Dendritic cell treated with granulocyte-macrophage colony-stimulating factor and Interleukin-4, amounts not matched to agents 40 ng/mL and 50 ng/mL, for 4 days (primary cell): ENCODE measurements at regions of chr9 and their contacts with region 1.

Region 1: GRCh38 chr9:38068866-38069629 is at the start of gene SHB:
- H3K4me3 Mint-ChIP-seq: peak within 1 kb of the TSS; percentile 85
- H3K27ac Mint-ChIP-seq: peak within 1 kb of the TSS; percentile 81
- H3K4me1 Mint-ChIP-seq: peaks cover 68% of the 10 kb centered on the region
- H3K27me3 Mint-ChIP-seq: peaks cover 3% of the 10 kb centered on the region

Region 2: GRCh38 chr9:37903647-37904444 is 165.2 kb before region 1 on chr9 and contains the start of gene SLC25A51:
- intact Hi-C with region 1: loop called (anchors 2 kb)
- H3K4me3 Mint-ChIP-seq: peak within 1 kb of the TSS; percentile 93
- H3K27ac Mint-ChIP-seq: peak within 1 kb of the TSS; percentile 90
- H3K4me1 Mint-ChIP-seq: peaks cover 28% of the 10 kb centered on the region
- H3K27me3 Mint-ChIP-seq: no peaks in the 10 kb centered on the region

Region 3: GRCh38 chr9:37929441-37929895 is 139.6 kb before region 1 on chr9:
- intact Hi-C with region 1: loop called (anchors 5 kb)
- H3K4me3 Mint-ChIP-seq: no peak overlapping the region
- H3K27ac Mint-ChIP-seq: peak overlapping the region; percentile 74
- H3K4me1 Mint-ChIP-seq: peaks cover 59% of the 10 kb centered on the region
- H3K27me3 Mint-ChIP-seq: no peaks in the 10 kb centered on the region

Region 4: DNA sequence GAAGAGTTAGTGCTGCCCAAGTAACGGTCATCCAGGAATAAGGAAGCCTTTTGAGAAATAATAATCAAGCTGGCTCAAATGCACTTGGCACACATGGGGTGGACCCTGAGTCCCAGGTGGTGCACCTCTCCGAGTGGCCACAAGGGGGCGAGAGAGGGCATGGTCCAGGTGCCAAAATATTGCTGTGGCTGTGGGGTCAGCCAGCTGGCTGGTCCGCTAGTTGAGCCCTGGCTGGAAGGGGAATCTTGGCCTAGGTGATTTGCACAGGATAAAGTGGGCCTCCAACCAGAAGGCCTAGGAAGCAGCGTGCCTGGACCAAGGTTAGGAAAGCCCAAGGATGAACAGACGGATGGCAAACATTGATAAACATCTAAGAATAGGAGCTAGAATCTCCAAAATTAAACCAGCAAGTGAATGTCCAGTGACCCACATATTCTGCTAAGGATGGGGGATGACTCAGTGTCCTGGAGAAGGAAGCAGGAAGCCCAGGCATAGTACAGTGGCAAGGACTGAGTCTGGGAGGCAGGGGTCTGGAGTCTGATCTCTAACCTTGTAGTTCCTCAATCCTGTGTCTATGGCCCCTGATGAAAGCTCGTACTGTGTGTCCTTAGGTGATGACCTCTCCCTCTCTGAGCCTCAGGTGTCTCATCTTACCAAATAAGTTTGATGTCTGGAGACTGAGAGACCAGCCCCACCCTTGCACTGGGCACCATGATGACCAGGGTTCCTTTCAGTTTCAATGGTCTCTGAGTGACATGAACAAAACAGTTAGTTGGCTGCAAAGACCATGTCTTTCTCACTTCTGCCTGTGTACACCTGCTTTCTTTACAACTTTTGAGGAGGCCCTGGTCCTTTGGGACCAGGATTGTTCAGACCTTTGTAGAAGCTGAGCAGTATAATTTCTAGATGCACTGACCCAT is 19.2 kb after region 1 on chr9:
- intact Hi-C with region 1: loop called (anchors 2 kb)
- H3K4me3 Mint-ChIP-seq: no peak overlapping the region
- H3K27ac Mint-ChIP-seq: no peak overlapping the region
- H3K4me1 Mint-ChIP-seq: peaks cover 62% of the 10 kb centered on the region
- H3K27me3 Mint-ChIP-seq: no peaks in the 10 kb centered on the region